Cardiac septum (tissue), 1 donor: ENCODE measurements at regions of chr15 and their contacts with region 1.

Region 1: GRCh38 chr15:69593981-69594966 is 141.7 kb downstream of the RPLP1 start:
- DNase-seq: no peak

Region 2: DNA sequence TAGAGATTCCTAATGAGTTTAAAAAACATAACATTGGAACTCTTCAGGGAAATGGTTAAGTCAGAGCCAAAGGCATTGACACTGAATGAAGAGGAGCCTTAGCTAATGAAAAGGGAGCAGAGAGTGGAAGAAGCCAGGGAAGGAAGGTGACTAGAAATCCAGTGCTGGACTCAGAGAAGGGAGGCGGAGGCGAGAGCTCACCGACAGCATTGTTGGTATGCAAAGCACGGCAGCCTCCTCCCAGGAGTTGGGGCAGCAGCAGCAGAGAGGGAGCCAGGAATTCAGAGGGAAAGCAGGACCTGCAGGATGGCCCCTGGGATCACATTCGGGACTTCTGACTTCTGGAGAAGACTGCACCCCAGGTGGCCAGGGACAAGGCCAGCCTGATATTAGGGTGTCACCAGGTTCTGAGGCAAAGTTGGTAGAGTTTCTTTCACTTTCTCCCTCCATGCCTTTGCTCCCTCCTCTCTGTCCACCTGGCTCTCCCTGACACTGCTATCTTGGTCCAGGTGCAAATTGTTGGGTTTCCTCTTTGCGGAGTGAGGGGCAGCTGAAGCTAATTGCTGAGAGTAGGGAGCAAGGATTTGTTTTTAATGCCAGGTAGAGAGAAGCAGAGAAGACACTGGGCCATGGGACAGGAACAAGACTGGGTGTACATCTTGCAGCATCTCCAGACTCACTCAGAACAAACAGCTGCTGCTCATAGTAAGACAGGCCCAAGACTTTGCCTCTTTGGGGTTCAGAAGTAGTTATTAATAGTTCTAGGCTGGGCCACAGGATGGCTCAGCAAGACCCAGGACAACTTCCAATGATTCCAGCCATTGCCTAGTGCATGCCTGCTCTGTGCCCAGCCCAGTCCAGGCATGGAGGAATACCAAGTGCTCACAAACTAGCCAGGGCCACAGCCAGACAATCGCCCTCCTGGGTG is 345.5 kb after region 1 on chr15:
- intact Hi-C with region 1: loop called (anchors 10 kb)
- DNase-seq: no peak

Region 3: GRCh38 chr15:70165716-70166284 is 571.5 kb after region 1 on chr15:
- intact Hi-C with region 1: loop called (anchors 5 kb)
- DNase-seq: peak; percentile 88